Dorsolateral prefrontal cortex (tissue), 120 donors: ENCODE measurements at regions of chr19 and their contacts with region 1.

Region 1: GRCh38 chr19:13861732-13862531 is 15.0 kb upstream of the NANOS3 start:
- DNase-seq: peak; percentile 90 to 95 (median 92)
- H3K4me3 ChIP-seq: peak overlapping the region; percentile 13 to 71 (median 52)
- H3K27ac ChIP-seq: peak overlapping the region in 58 of 59 donors; percentile 4 to 93 (median 80)
- H3K27me3 ChIP-seq: no peaks in the 10 kb centered on the region
- CTCF ChIP-seq: peak; percentile 96 to 100 (median 99)

Region 2: GRCh38 chr19:13597640-13598039 is 264.3 kb before region 1 on chr19:
- intact Hi-C with region 1: loop called (anchors 5 kb)
- DNase-seq: peak in 8 of 10 donors; percentile 40 to 67 (median 57)
- H3K4me3 ChIP-seq: no peak overlapping the region
- H3K27ac ChIP-seq: no peak overlapping the region
- H3K27me3 ChIP-seq: peaks cover 0 to 3% (median 0%) of the 10 kb centered on the region in 45 donors
- CTCF ChIP-seq: peak in 55 of 56 donors; percentile 44 to 87 (median 72)

Region 3: GRCh38 chr19:13774217-13775191 is 87.4 kb before region 1 on chr19 and contains the start of gene C19orf53:
- intact Hi-C with region 1: loop called in 1 of 2 experiments (anchors 5 kb)
- DNase-seq: peak; percentile 92 to 97 (median 94)
- H3K4me3 ChIP-seq: peak within 1 kb of the TSS; percentile 59 to 99 (median 87)
- H3K27ac ChIP-seq: peak within 1 kb of the TSS in 56 of 59 donors; percentile 32 to 95 (median 81)
- H3K27me3 ChIP-seq: no peaks in the 10 kb centered on the region
- CTCF ChIP-seq: peak in 16 of 56 donors; percentile 16 to 57 (median 37)
- total RNA-seq, gene C19orf53: 44.9 to 112 (median 67.3) TPM

Region 4: GRCh38 chr19:13784731-13785452 is 77.0 kb before region 1 on chr19:
- intact Hi-C with region 1: loop called (anchors 1 to 2 kb)
- DNase-seq: peak in 9 of 10 donors; percentile 33 to 79 (median 56)
- H3K4me3 ChIP-seq: peak overlapping the region in 22 of 59 donors; percentile 5 to 47 (median 22)
- H3K27ac ChIP-seq: peak overlapping the region in 2 of 59 donors; percentile 2 to 9
- H3K27me3 ChIP-seq: no peaks in the 10 kb centered on the region
- CTCF ChIP-seq: peak; percentile 22 to 82 (median 66)

Region 5: DNA sequence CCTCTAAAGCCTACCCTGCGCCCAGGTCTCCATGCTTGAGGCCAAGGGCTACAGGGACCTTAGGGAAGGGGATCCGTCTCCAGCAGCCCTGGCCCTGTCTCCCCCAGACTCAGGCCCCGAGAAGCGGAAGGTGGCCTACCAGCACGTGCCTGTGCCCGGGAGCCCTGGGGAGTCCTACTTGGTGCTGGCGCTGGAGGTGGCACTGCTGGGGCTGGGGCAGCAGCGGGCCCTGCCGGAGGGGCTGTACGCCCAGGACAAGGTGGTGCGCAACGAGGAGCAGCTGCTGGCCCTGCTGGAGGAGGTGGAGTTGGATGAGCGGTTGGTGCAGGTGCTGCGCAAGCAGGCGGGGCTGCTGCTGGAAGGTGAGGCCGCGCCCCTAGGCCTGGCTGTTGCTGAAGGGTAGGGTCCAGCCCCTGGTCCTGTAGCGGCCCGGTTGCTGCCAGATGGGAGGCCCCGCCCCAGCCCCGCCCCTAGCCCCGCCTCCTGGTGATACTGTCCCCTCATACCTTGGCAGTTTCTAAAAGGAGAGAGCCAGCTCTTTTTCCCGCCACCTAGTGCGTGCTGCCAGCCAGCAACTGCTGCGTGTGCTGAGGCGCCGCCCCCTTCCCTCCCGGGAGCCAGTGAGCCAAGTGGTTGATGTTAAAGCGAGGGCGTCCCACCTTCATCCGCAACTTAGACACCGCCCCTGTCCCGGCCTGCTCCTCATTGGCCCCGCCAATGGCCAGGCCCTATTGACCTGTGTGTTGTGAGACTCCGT is 44.1 kb before region 1 on chr19:
- intact Hi-C with region 1: no loop called
- DNase-seq: no peak
- H3K4me3 ChIP-seq: peak overlapping the region in 5 of 59 donors; percentile 2 to 39 (median 12)
- H3K27ac ChIP-seq: no peak overlapping the region
- H3K27me3 ChIP-seq: no peaks in the 10 kb centered on the region
- CTCF ChIP-seq: no peak